ENCODE measurements at regions of chr12 and their contacts with region 1.

Region 1: GRCh38 chr12:54191550-54192022 is 2.8 kb upstream of the SMUG1 start:
- DNase-seq: peak; percentile 82 to 90
- H3K4me3 ChIP-seq: no peak overlapping the region
- H3K4me1 ChIP-seq: peaks cover 11% of the 10 kb centered on the region
- H3K27me3 ChIP-seq: peaks cover 4% of the 10 kb centered on the region; the same call in 1 of the 2 replicates

Region 2: GRCh38 chr12:54032627-54033100 is 158.9 kb before region 1 on chr12 and contains the start of gene HOXC5:
- in situ Hi-C with region 1: loop called (anchors 5 kb)
- DNase-seq: peak; percentile 74 to 86
- H3K4me3 ChIP-seq: peak within 1 kb of the TSS; percentile 22
- H3K4me1 ChIP-seq: peaks cover 22% of the 10 kb centered on the region
- H3K27me3 ChIP-seq: peaks cover 32% of the 10 kb centered on the region

Region 3: DNA sequence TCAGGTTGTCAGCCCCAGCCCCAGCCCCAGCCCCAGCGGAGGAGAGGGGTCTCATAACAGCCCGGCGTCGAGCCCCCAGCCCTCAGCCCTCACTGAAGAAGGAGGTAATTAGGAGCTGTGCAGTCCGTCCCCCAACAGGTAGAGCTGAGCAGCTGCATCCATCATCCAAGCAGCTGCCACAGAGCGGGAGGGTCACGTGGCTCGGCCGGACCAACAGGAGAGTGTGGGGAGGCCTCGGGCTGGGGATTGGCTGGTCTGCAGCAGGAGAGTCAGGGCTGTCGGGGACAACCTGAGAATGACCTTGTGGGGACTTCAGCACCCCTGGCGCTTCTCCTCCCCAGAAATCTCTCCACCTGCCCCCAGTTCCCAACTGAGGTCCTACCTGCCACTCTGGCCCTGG is 32.4 kb before region 1 on chr12:
- in situ Hi-C with region 1: no loop called
- DNase-seq: peak; percentile 32 to 80
- H3K4me3 ChIP-seq: no peak overlapping the region
- H3K4me1 ChIP-seq: peaks cover 4% of the 10 kb centered on the region
- H3K27me3 ChIP-seq: peaks cover 13% of the 10 kb centered on the region; the same call in 1 of the 2 replicates